Left cardiac atrium (tissue), 4 donors: ENCODE measurements at regions of chr4 and their contacts with region 1.

Region 1: DNA sequence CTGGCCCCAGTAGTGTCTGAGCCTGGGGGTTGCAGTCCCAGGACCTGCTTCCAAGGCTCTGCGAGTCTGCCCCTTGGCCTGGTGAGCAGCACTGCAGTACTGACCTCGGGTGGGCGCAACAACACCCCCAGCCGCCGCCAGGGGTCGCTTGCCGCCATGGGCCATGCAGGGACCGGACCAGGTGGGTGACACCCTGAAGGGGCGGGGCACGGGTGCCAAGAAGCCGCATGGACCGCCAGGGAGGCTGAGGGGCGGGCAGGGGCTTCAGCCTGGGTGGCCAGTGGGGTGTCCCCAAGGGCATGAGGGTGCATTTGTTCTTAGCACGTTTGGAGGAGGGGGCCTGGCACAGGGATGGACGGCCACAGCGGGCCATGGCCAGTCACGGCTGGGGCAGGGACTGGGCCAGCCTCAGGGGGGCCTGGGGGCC is 25.0 kb downstream of the TACC3 start:
- DNase-seq: peak; percentile 81
- ATAC-seq: peak; percentile 70 to 76

Region 2: DNA sequence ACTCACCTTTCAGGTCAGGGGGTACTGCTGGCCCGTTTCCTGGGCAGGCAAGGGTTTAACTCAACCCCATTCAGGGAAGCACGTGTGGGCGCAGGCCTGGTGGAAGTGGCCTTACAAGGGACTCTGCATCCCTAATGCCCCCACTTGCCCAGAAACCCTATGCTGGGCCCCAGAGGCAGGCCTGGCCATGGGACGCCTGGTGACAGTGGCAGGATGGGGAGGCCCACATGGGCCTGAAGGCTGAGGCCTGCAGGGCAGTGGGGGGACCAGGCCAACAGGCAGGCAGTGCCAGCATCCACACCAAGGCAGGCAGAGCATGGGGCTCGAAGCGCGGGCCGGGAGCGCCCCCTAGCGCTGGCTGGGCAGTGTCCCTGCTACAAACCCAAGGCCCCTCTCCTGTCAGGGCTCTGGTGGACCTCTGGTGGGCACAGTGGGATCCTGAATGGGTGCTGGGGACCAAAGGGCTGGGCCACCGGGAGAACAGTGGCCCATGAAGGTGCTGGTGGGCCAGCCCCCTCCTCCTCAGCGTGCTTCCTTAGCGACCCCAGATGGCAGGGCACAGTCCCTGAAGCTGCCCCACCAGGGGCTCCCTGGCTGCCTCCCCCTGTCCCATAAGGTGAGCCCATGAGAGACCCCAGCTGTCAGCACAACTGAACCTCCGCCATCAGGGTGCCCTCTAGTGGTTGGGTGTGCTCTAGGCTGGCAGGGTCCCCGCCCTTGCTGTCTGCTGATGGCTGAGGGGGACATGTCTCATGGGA is 63.7 kb after region 1 on chr4:
- intact Hi-C with region 1: loop called (anchors 2 to 5 kb)
- DNase-seq: peak; percentile 71
- ATAC-seq: peak; percentile 77 to 80

Region 3: DNA sequence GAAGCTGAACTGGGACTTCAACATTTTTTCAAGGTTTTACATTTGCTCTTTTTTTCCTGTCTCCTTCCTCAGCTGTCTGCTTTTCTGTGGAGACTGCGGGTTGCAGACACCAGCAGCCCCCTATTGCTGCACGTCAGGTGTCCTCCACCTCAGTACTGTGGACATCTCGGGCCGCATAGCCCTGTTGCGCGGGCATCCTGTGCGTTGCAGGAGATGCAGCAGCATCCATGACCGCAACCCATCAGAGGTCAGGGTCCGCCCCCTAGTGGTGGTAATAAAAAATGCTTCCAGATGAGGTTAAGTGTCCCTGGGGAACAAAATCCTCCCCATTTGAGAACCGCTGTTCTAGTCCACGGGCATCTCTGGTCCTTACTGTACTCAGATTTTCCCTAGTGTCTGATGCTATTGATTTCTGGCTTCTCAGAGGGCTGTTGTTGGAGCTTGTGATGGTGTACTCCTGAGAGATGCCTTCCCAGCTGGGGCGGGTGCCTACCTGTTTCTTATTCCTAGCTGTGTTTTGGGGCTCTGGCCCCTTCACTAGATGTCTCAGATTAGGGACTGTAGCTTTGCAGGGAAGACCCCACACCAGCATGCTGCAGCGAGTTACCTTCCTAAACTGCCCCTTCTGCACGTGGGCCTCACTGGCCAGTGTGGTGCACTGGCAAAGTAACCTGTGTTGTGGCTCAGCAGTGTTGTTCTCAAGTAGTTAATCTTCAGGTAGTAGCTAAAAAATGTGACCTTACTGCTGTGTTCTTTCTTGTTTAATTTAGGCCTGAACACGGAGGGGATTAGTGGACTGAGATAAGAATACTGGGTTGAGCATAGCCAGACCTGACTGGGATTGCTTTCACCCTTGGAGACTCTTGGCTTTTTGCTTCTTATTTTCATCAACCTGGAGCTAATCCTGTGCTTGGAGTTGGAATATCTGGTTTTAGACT is 153.1 kb after region 1 on chr4:
- intact Hi-C with region 1: loop called (anchors 1 to 5 kb)
- DNase-seq: peak; percentile 70
- ATAC-seq: peak; percentile 92